ENCODE measurements at regions of chr7 and their contacts with region 1.

Region 1: GRCh38 chr7:148262721-148263229 is 327.8 kb upstream of the C7orf33 start:
- DNase-seq: peak; percentile 51
- H3K4me3 ChIP-seq: no peak overlapping the region
- H3K27ac ChIP-seq: no peak overlapping the region
- H3K4me1 ChIP-seq: no peaks in the 10 kb centered on the region
- CTCF ChIP-seq: peak; percentile 94

Region 2: DNA sequence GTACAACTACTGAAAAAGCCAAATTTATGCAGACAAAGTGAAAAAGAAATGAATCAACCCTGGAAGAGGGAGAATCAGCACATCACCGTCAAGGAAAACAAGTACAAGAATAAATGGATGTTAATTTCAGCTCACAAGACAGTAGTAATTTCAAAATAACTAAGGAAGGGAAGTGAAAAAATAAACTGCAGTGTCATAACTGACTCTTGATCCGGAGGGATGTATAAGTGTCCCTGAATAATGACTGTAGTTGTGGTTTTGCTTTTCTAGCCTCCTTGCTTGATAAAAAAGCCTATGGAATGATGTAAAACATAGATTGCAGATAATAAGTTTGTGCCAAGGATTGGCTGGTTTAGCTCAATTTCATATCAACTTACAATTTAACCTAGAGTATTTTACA is 393.3 kb before region 1 on chr7:
- CTCF ChIA-PET with region 1: no interaction called
- POLR2A ChIA-PET with region 1: no interaction called
- intact Hi-C with region 1: no loop called
- DNase-seq: no peak
- H3K4me3 ChIP-seq: no peak overlapping the region
- H3K27ac ChIP-seq: no peak overlapping the region
- H3K4me1 ChIP-seq: no peaks in the 10 kb centered on the region
- CTCF ChIP-seq: no peak

Region 3: DNA sequence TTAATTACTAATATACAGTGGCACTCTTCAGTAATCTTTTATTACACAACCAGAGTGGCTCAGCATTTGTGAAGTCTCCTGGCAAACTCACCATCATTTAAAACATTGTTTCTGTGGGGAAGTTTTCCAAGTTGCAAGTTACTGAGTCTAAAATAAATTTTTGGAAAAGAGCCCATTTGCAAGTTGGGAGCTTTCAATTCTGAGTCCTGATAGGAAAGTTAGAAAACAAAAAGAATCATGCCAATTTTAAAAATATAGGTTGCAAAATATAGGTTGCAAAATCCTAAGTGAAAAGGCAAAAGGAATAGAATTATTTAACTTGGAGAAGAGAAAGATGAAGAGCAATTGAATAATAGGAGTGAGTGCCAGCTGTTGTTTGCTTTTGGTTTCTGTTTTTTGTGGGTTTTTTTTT is 51.0 kb before region 1 on chr7:
- CTCF ChIA-PET with region 1: no interaction called
- POLR2A ChIA-PET with region 1: no interaction called
- intact Hi-C with region 1: no loop called
- DNase-seq: no peak
- H3K4me3 ChIP-seq: no peak overlapping the region
- H3K27ac ChIP-seq: no peak overlapping the region
- H3K4me1 ChIP-seq: no peaks in the 10 kb centered on the region
- CTCF ChIP-seq: no peak

Region 4: GRCh38 chr7:148290538-148290937 is 27.8 kb after region 1 on chr7:
- CTCF ChIA-PET with region 1: no interaction called
- POLR2A ChIA-PET with region 1: no interaction called
- intact Hi-C with region 1: no loop called
- DNase-seq: no peak
- H3K4me3 ChIP-seq: no peak overlapping the region
- H3K27ac ChIP-seq: no peak overlapping the region
- H3K4me1 ChIP-seq: peaks cover 6% of the 10 kb centered on the region
- CTCF ChIP-seq: no peak

Region 5: GRCh38 chr7:148367731-148368475 is 105.1 kb after region 1 on chr7:
- CTCF ChIA-PET with region 1: no interaction called
- POLR2A ChIA-PET with region 1: no interaction called
- intact Hi-C with region 1: no loop called
- DNase-seq: no peak
- H3K4me3 ChIP-seq: no peak overlapping the region
- H3K27ac ChIP-seq: no peak overlapping the region
- H3K4me1 ChIP-seq: no peaks in the 10 kb centered on the region
- CTCF ChIP-seq: no peak

Region 6: DNA sequence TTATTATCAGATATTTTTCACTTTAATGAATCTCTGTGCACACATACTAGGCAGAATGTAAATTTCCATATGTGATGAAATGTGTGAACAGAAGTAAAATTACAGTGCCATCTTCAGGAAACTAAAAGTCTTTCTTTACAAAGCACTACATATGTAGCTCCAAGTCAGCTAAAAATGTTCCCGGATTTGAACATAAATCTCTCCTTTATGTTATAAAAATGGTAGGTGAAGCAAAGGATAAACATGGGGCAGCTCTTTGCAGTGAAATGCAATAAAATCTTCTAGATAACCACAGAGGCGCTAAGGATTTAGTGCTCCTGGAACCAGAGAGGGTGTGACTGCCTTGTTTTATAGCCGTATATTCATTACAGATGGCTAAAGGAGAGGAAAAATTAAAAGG is 222.8 kb after region 1 on chr7:
- CTCF ChIA-PET with region 1: no interaction called
- POLR2A ChIA-PET with region 1: no interaction called
- intact Hi-C with region 1: loop called (anchors 5 kb)
- DNase-seq: no peak
- H3K4me3 ChIP-seq: no peak overlapping the region
- H3K27ac ChIP-seq: no peak overlapping the region
- H3K4me1 ChIP-seq: no peaks in the 10 kb centered on the region
- CTCF ChIP-seq: peak; percentile 56

Region 7: DNA sequence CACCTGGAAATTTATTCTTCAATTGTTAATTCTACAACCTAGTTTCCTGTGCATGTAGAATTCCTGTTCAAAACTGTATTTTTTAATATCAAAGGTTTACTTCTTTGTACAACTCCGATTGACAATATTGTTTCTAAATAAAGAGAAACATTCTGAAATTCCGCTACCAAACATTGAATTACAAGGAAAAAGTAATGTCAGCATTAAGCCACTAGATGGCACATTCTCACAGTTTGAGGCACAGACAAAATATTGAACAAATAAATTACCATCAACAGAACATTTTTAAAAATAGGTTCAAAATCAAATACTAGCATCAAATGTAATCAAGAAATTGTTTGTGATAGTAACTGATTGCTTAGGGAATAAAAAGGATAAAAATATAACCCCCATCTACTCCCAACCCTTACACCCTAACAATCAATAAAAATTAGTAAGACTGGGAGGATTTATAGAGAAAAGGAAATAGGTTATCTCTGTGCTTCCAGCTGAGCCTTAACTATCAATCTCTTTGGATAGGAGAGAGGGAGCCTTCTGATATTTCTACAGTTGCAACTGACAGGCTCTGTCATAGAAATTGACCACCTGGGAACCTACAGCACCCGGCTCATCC is 241.2 kb after region 1 on chr7:
- CTCF ChIA-PET with region 1: no interaction called
- POLR2A ChIA-PET with region 1: no interaction called
- intact Hi-C with region 1: loop called (anchors 5 kb)
- DNase-seq: peak; percentile 47
- H3K4me3 ChIP-seq: no peak overlapping the region
- H3K27ac ChIP-seq: no peak overlapping the region
- H3K4me1 ChIP-seq: peaks cover 9% of the 10 kb centered on the region
- CTCF ChIP-seq: peak; percentile 98

Region 8: DNA sequence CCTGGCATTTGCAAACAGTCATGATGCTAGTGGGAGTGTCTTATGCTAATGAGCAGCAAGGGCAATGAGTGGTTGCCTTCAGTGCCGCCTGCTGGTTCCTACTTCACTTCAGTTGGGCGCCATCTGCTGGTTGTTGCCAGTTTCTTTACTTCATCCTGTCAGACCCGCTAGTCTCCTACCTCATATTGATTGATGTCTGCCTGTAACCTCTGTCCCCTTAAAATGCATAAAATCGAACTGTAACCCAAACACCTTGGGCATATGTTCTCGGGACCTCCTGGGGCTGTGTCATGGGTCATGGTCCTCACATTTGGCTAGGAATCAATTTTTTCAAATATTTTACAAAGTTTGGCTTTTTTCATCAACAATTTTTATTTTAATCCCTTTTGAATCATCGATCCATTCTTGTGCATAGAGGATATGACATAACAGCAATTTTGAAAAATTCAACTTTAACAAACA is 265.0 kb after region 1 on chr7:
- CTCF ChIA-PET with region 1: no interaction called
- POLR2A ChIA-PET with region 1: interaction called, 3 read pairs
- intact Hi-C with region 1: loop called (anchors 1 kb)
- DNase-seq: peak; percentile 81
- H3K4me3 ChIP-seq: no peak overlapping the region
- H3K27ac ChIP-seq: no peak overlapping the region
- H3K4me1 ChIP-seq: no peaks in the 10 kb centered on the region
- CTCF ChIP-seq: peak; percentile 92

Measured in OCI-LY7 (cell line).